ENCODE measurements at regions of chr17 and their contacts with region 1.

Region 1: GRCh38 chr17:19447085-19447583 is 36.1 kb downstream of the RNF112 start:
- DNase-seq: peak; percentile 57 to 72 (median 65)
- H3K4me3 ChIP-seq: no peak overlapping the region
- H3K4me3 Mint-ChIP-seq: no peak overlapping the region
- H3K27ac ChIP-seq: no peak overlapping the region
- H3K27ac Mint-ChIP-seq: peak overlapping the region in 1 of 8 donors; percentile 19
- H3K4me1 ChIP-seq: no peaks in the 10 kb centered on the region
- H3K4me1 Mint-ChIP-seq: peaks cover 0 to 5% (median 3%) of the 10 kb centered on the region in 3 donors
- H3K27me3 ChIP-seq: no peaks in the 10 kb centered on the region
- H3K27me3 Mint-ChIP-seq: peaks cover 16 to 27% of the 10 kb centered on the region in 2 donors

Region 2: DNA sequence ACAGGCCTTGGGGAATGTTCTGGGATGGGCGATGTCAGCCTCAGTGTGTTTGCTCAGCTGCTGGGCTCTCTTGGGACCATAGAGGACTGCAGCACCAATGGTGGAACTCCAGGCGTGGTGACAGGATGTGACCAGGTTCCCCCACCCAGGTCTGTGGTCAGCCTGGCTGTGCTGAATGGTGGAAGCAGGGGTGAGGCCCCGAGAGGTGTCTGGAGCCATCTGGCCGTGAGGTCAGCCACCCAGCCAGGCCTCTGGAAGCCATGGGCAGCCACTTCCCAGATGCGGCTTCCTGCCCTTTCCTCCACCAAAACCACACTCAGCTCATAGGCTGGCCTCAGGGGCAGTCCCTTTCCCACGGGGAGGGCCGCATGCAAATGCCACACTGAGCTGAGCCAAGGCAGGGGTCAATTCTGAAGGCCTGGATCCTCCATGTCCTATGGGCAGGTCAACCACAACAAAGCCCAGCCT is 76.6 kb before region 1 on chr17:
- CTCF ChIA-PET with region 1: interaction called, 152 read pairs
- POLR2A ChIA-PET with region 1: no interaction called
- DNase-seq: peak in 1 of 5 donors; percentile 48
- H3K4me3 ChIP-seq: peak overlapping the region; percentile 3
- H3K4me3 Mint-ChIP-seq: peak overlapping the region; percentile 48 to 85 (median 83)
- H3K27ac ChIP-seq: no peak overlapping the region
- H3K27ac Mint-ChIP-seq: peak overlapping the region; percentile 85 to 96 (median 95)
- H3K4me1 ChIP-seq: peaks cover 44% of the 10 kb centered on the region
- H3K4me1 Mint-ChIP-seq: peaks cover 48 to 52% (median 50%) of the 10 kb centered on the region in 3 donors
- H3K27me3 ChIP-seq: no peaks in the 10 kb centered on the region
- H3K27me3 Mint-ChIP-seq: peaks cover 0 to 2% of the 10 kb centered on the region in 2 donors

Region 3: DNA sequence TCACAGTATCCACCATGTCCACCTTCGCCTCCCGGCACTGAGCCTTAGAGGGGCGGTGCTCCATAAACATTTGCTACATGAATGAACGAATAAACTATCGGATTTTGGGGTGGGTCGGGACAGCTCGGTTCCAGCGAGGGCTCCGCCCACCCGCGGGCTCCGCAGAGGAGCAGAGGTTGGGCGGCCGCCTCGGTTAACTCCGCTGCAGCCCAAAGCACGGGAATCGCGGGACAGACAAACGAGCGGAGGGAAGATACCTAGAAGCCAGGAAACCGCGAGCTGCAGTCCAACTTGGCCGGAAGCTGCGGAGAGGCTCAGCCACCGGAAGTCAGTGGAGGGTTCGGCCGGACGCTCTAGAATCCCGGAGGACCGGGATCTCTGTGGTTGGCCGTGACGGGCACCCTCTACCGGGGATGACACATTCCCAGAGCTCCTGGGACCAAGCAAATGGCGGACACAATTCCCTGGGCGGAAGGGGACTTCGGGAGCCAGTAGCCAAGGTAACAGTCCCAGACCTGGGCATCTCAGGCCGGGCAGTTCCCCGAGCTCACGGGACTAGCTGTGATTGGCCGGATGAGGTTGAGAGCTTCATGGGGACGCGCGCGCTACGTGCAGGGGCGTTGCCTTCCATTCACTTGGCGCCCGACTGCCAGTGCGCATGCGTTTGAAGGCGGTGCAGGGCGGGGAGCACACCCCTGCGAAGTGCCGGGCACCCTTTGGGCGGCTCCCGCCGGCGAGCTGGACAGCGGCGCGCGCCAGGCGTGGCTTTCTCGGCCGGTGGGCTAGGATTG is 69.3 kb before region 1 on chr17:
- CTCF ChIA-PET with region 1: interaction called, 15 read pairs
- POLR2A ChIA-PET with region 1: no interaction called
- DNase-seq: peak; percentile 89 to 96 (median 93)
- H3K4me3 ChIP-seq: peak overlapping the region; percentile 100
- H3K4me3 Mint-ChIP-seq: peak overlapping the region; percentile 94 to 100 (median 97)
- H3K27ac ChIP-seq: peak overlapping the region; percentile 95
- H3K27ac Mint-ChIP-seq: peak overlapping the region; percentile 92 to 98 (median 96)
- H3K4me1 ChIP-seq: peaks cover 11% of the 10 kb centered on the region
- H3K4me1 Mint-ChIP-seq: peaks cover 25 to 31% (median 26%) of the 10 kb centered on the region in 3 donors
- H3K27me3 ChIP-seq: no peaks in the 10 kb centered on the region
- H3K27me3 Mint-ChIP-seq: no peaks in the 10 kb centered on the region

Region 4: GRCh38 chr17:19457830-19458271 is 10.7 kb after region 1 on chr17:
- CTCF ChIA-PET with region 1: interaction called, 11 read pairs
- POLR2A ChIA-PET with region 1: no interaction called
- DNase-seq: no peak
- H3K4me3 ChIP-seq: no peak overlapping the region
- H3K4me3 Mint-ChIP-seq: no peak overlapping the region
- H3K27ac ChIP-seq: no peak overlapping the region
- H3K27ac Mint-ChIP-seq: peak overlapping the region in 1 of 8 donors; percentile 2
- H3K4me1 ChIP-seq: peaks cover 22% of the 10 kb centered on the region
- H3K4me1 Mint-ChIP-seq: peaks cover 19 to 34% (median 21%) of the 10 kb centered on the region in 3 donors
- H3K27me3 ChIP-seq: no peaks in the 10 kb centered on the region
- H3K27me3 Mint-ChIP-seq: peaks cover under 1 to 2% of the 10 kb centered on the region in 2 donors

Measured in CD8-positive, alpha-beta memory T cell (primary cell).